PC-3 (cell line): ENCODE measurements at regions of chr14 and their contacts with region 1.

Region 1: GRCh38 chr14:60064491-60065072 is 27.1 kb upstream of the PCNX4 start:
- DNase-seq: peak; percentile 87
- ATAC-seq: peak; percentile 49
- H3K4me3 ChIP-seq: no peak overlapping the region
- H3K27ac ChIP-seq: no peak overlapping the region
- H3K4me1 ChIP-seq: peaks cover 19% of the 10 kb centered on the region
- H3K27me3 ChIP-seq: no peaks in the 10 kb centered on the region
- CTCF ChIP-seq: peak; percentile 98

Region 2: GRCh38 chr14:59964251-59965007 is 100.2 kb before region 1 on chr14:
- CTCF ChIA-PET with region 1: interaction called, 8 read pairs
- POLR2A ChIA-PET with region 1: no interaction called
- intact Hi-C with region 1: loop called (anchors 1 kb)
- DNase-seq: peak; percentile 70
- ATAC-seq: peak; percentile 66
- H3K4me3 ChIP-seq: no peak overlapping the region
- H3K27ac ChIP-seq: no peak overlapping the region
- H3K4me1 ChIP-seq: peaks cover 18% of the 10 kb centered on the region
- H3K27me3 ChIP-seq: peaks cover 23% of the 10 kb centered on the region
- CTCF ChIP-seq: no peak

Region 3: GRCh38 chr14:60008042-60008441 is 56.5 kb before region 1 on chr14:
- CTCF ChIA-PET with region 1: interaction called, 3 read pairs
- POLR2A ChIA-PET with region 1: no interaction called
- intact Hi-C with region 1: loop called (anchors 1 kb)
- DNase-seq: peak; percentile 80
- ATAC-seq: peak; percentile 74
- H3K4me3 ChIP-seq: no peak overlapping the region
- H3K27ac ChIP-seq: no peak overlapping the region
- H3K4me1 ChIP-seq: peaks cover 19% of the 10 kb centered on the region
- H3K27me3 ChIP-seq: no peaks in the 10 kb centered on the region
- CTCF ChIP-seq: no peak

Region 4: DNA sequence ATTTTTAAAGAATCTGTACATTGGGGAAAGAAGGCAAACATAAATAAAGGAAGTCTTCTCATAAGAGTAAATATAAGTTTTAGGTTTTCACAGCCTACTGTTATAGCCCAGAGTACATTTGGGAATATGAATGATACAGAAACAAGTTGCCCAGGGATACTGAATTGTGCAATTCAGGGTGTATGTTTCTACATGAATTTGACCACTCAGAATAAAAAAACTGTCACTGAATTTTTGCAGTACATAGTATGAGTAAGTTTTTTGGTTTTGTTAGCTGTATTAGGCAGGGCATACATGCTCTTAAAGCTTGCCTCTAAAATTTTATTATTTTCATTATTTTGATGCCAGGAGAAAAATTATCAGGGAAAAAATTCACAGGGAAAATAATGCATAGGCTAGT is 20.5 kb after region 1 on chr14:
- CTCF ChIA-PET with region 1: no interaction called
- POLR2A ChIA-PET with region 1: no interaction called
- intact Hi-C with region 1: no loop called
- DNase-seq: no peak
- ATAC-seq: no peak
- H3K4me3 ChIP-seq: no peak overlapping the region
- H3K27ac ChIP-seq: no peak overlapping the region
- H3K4me1 ChIP-seq: no peaks in the 10 kb centered on the region
- H3K27me3 ChIP-seq: no peaks in the 10 kb centered on the region
- CTCF ChIP-seq: no peak

Region 5: GRCh38 chr14:60151715-60152114 is 87.1 kb after region 1 on chr14:
- CTCF ChIA-PET with region 1: no interaction called
- POLR2A ChIA-PET with region 1: no interaction called
- intact Hi-C with region 1: loop called (anchors 1 kb)
- DNase-seq: peak; percentile 100
- ATAC-seq: peak; percentile 100
- H3K4me3 ChIP-seq: no peak overlapping the region
- H3K27ac ChIP-seq: peak overlapping the region; percentile 55
- H3K4me1 ChIP-seq: peaks cover 24% of the 10 kb centered on the region
- H3K27me3 ChIP-seq: no peaks in the 10 kb centered on the region
- CTCF ChIP-seq: no peak

Region 6: GRCh38 chr14:60485598-60486251 is 421.1 kb after region 1 on chr14 and contains the start of gene C14orf39:
- CTCF ChIA-PET with region 1: no interaction called
- POLR2A ChIA-PET with region 1: no interaction called
- intact Hi-C with region 1: loop called (anchors 2 kb)
- DNase-seq: peak; percentile 65
- ATAC-seq: peak; percentile 75
- H3K4me3 ChIP-seq: peak within 1 kb of the TSS; percentile 57
- H3K27ac ChIP-seq: no peak within 1 kb of the TSS
- H3K4me1 ChIP-seq: peaks cover 12% of the 10 kb centered on the region; the same call in 1 of the 2 replicates
- H3K27me3 ChIP-seq: peaks cover 19% of the 10 kb centered on the region; the same call in 1 of the 2 replicates
- CTCF ChIP-seq: no peak
- total RNA-seq, gene C14orf39: 0.17 and 0.47 TPM in 2 replicates